Natural killer cell (primary cell): ENCODE measurements at regions of chr15 and their contacts with region 1.

Region 1: GRCh38 chr15:91055548-91056331 is 33.3 kb upstream of the VPS33B start:
- DNase-seq: peak in 1 of 2 donors; percentile 64
- ATAC-seq: no peak
- H3K4me3 ChIP-seq: no peak overlapping the region
- H3K4me3 Mint-ChIP-seq: no peak overlapping the region
- H3K27ac ChIP-seq: no peak overlapping the region
- H3K27ac Mint-ChIP-seq: no peak overlapping the region
- H3K4me1 ChIP-seq: no peaks in the 10 kb centered on the region
- H3K4me1 Mint-ChIP-seq: no peaks in the 10 kb centered on the region
- H3K27me3 ChIP-seq: peaks cover 6% of the 10 kb centered on the region
- H3K27me3 Mint-ChIP-seq: peaks cover 46 to 79% of the 10 kb centered on the region in 2 donors
- CTCF ChIP-seq: peak; percentile 42

Region 2: DNA sequence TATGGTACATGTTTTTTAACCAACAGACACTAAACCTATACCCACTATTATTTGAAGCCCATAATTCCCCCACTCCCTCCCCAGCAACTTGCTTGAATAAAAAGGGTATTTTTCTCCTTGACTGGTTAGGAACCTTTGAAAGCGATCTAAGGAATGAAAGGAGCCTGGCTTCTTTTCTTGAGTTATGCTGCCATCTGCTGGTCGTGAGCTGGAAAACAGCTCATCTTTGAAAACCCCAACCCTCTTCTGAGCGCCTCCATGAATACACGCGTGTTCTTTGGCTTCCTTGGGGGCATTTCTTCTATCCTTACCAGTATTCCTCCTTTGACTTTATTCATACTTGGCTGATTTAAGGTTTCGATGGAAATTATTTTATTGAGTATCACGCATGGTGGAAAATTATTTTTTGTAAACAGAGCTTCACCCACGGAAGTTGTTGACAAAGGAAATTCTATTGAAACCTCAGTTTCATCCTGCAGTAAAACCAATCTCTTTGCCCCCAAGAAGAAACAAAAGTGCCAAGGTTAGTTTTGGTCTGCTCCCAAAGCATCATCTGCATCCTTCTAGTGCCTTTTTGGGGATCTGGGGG is 215.9 kb after region 1 on chr15:
- intact Hi-C with region 1: loop called (anchors 5 kb)
- DNase-seq: peak; percentile 27 to 86
- ATAC-seq: peak; percentile 63 to 78 (median 75)
- H3K4me3 ChIP-seq: no peak overlapping the region
- H3K4me3 Mint-ChIP-seq: peak overlapping the region; percentile 22
- H3K27ac ChIP-seq: no peak overlapping the region
- H3K27ac Mint-ChIP-seq: no peak overlapping the region
- H3K4me1 ChIP-seq: no peaks in the 10 kb centered on the region
- H3K4me1 Mint-ChIP-seq: peaks cover 6% of the 10 kb centered on the region in 2 donors
- H3K27me3 ChIP-seq: peaks cover 2% of the 10 kb centered on the region
- H3K27me3 Mint-ChIP-seq: peaks cover 24 to 71% of the 10 kb centered on the region in 2 donors
- CTCF ChIP-seq: peak; percentile 71